Activated T-helper 2 cell treated with anti-CD3 and anti-CD28 coated beads, Interferon-gamma antibody, Interleukin-2, Interleukin-4, amounts not matched to agents 10 μg/mL and 5 μg/mL and 100 μg/mL, durations not matched to agents 14 hours and 24 hours and 36 hours (primary cell): ENCODE measurements at regions of chr5 and their contacts with region 1.

Region 1: GRCh38 chr5:145936401-145937131 is at the start of gene SH3RF2:
- DNase-seq: peak; percentile 42
- H3K4me3 Mint-ChIP-seq: peak within 1 kb of the TSS; percentile 80
- H3K27ac Mint-ChIP-seq: peak within 1 kb of the TSS; percentile 83
- H3K4me1 Mint-ChIP-seq: peaks cover 56% of the 10 kb centered on the region
- H3K27me3 Mint-ChIP-seq: peaks cover 26% of the 10 kb centered on the region
- total RNA-seq, gene SH3RF2: 0.21 and 0.57 TPM in 2 replicates

Region 2: DNA sequence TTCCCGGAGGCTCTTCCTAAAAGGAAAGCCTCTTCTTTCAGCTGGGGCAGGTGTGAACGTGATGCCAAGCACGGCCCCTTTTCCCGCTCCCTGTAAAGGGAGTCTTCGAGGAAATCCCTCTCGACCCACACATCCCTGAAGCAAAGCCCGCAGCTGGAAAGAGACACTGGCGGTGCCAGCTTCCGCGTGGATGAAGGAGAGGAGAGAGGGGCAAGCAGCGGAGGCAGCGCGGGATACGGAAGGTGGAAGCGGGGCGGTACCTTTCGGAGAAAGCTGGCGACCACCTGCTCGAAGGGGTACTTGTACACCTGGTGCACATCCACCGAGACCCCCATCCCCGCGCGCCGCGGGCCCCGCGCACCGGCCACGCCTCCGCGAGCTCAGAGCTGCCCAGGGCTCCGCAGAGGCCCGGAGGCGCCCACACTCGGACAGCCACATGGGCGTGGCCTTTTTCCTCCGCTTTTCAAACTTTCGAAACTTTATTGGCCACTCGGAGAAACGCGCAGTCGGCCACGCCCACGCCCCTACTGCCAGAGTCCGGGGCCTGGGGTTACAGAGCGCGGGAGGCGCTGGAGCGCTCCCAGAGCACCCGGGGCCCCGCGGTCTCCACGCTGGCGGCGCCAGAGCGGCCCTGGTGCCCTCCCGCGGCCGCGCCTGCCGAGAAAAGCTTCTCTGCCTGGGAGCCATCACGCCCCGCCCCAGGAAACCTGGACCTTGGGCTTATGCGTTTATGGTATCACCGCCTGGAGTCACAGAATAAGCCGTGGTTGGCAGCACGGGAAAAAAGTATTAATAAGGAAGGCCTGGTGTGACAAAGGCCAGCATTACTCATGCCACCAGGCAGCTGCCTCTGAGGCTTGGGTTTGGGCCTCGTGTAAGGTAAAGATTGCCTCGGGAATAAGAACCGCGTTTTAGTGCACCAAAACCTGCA is 101.4 kb before region 1 on chr5 and contains the start of gene PRELID2:
- intact Hi-C with region 1: loop called (anchors 2 kb)
- DNase-seq: peak; percentile 56
- H3K4me3 Mint-ChIP-seq: peak within 1 kb of the TSS; percentile 73
- H3K27ac Mint-ChIP-seq: peak within 1 kb of the TSS; percentile 28
- H3K4me1 Mint-ChIP-seq: peaks cover 24% of the 10 kb centered on the region
- H3K27me3 Mint-ChIP-seq: peaks cover 12% of the 10 kb centered on the region
- total RNA-seq, gene PRELID2: 5.6 and 7.1 TPM in 2 replicates

Region 3: GRCh38 chr5:145903113-145903512 is 33.5 kb before region 1 on chr5:
- intact Hi-C with region 1: no loop called
- DNase-seq: no peak
- H3K4me3 Mint-ChIP-seq: no peak overlapping the region
- H3K27ac Mint-ChIP-seq: no peak overlapping the region
- H3K4me1 Mint-ChIP-seq: no peaks in the 10 kb centered on the region
- H3K27me3 Mint-ChIP-seq: peaks cover 29% of the 10 kb centered on the region

Region 4: DNA sequence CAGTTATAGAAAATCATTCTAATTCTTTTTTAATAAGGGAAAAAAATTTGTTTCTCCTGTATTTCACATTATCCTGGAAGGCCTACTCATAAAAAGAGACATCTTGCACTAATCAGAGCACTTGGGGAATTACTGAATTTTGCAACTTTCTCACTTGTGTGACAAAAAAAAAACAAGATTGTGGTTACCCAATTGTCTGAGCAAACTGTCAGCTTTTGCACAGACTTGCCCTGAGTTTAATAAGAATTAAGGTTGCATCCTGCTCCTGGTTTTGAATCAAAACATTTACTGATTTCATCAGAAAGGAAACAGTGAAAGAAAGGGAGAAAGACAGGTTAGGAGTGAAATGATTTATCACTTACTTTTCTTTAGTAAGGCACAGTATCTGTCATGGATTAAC is 10.8 kb before region 1 on chr5:
- intact Hi-C with region 1: loop called (anchors 1 kb)
- DNase-seq: no peak
- H3K4me3 Mint-ChIP-seq: no peak overlapping the region
- H3K27ac Mint-ChIP-seq: no peak overlapping the region
- H3K4me1 Mint-ChIP-seq: peaks cover 7% of the 10 kb centered on the region
- H3K27me3 Mint-ChIP-seq: peaks cover 7% of the 10 kb centered on the region

Region 5: GRCh38 chr5:145975361-145976066 is 38.9 kb after region 1 on chr5:
- intact Hi-C with region 1: loop called (anchors 5 kb)
- DNase-seq: no peak
- H3K4me3 Mint-ChIP-seq: no peak overlapping the region
- H3K27ac Mint-ChIP-seq: no peak overlapping the region
- H3K4me1 Mint-ChIP-seq: peaks cover 3% of the 10 kb centered on the region
- H3K27me3 Mint-ChIP-seq: no peaks in the 10 kb centered on the region

Region 6: GRCh38 chr5:146091881-146092280 is 155.3 kb after region 1 on chr5:
- intact Hi-C with region 1: no loop called
- DNase-seq: no peak
- H3K4me3 Mint-ChIP-seq: no peak overlapping the region
- H3K27ac Mint-ChIP-seq: no peak overlapping the region
- H3K4me1 Mint-ChIP-seq: no peaks in the 10 kb centered on the region
- H3K27me3 Mint-ChIP-seq: no peaks in the 10 kb centered on the region

Region 7: GRCh38 chr5:146301626-146302025 is 365.1 kb after region 1 on chr5:
- intact Hi-C with region 1: no loop called
- DNase-seq: no peak
- H3K4me3 Mint-ChIP-seq: no peak overlapping the region
- H3K27ac Mint-ChIP-seq: no peak overlapping the region
- H3K4me1 Mint-ChIP-seq: no peaks in the 10 kb centered on the region
- H3K27me3 Mint-ChIP-seq: peaks cover 21% of the 10 kb centered on the region